ENCODE measurements at regions of chr20 and their contacts with region 1.

Region 1: GRCh38 chr20:40962730-40963504 is 65.7 kb upstream of the TOP1 start:
- DNase-seq: peak; percentile 90
- H3K4me3 Mint-ChIP-seq: no peak overlapping the region
- H3K27ac Mint-ChIP-seq: no peak overlapping the region
- H3K4me1 Mint-ChIP-seq: no peaks in the 10 kb centered on the region
- H3K27me3 Mint-ChIP-seq: peaks cover 48% of the 10 kb centered on the region
- CTCF ChIP-seq: peak; percentile 97

Region 2: DNA sequence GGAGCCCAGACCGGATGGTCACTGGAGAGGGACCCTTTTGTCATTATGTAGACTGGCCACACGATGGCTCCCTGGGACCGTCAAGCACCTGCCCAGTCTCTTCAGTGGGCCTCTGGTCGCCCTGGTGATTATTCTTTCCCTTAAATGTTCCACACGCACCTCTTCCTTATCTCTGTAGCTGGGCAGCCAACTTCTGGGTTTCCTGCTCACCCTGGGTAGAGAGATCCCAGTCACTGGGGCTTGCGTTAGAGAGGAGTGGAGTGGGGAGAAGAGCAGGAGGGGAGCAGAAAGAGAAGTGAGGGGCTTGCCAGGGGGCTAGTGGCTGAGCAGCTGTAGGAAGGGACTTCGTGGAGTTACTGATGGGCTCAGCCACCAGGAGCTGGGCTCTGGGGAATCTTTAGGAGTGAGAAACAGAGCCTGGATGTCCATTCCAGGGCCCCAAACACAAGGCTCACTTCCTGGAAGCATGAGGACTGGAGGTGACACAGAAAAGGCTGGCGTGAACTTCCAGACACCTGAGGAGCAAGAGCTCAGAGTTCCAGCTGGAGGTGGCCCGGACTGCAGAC is 1850.7 kb before region 1 on chr20:
- CTCF ChIA-PET with region 1: interaction called, 11 read pairs
- intact Hi-C with region 1: loop called (anchors 2 kb)
- DNase-seq: peak; percentile 80
- H3K4me3 Mint-ChIP-seq: peak overlapping the region; percentile 10
- H3K27ac Mint-ChIP-seq: peak overlapping the region; percentile 16
- H3K4me1 Mint-ChIP-seq: peaks cover 17% of the 10 kb centered on the region
- H3K27me3 Mint-ChIP-seq: peaks cover 93% of the 10 kb centered on the region
- CTCF ChIP-seq: peak; percentile 82

Region 3: DNA sequence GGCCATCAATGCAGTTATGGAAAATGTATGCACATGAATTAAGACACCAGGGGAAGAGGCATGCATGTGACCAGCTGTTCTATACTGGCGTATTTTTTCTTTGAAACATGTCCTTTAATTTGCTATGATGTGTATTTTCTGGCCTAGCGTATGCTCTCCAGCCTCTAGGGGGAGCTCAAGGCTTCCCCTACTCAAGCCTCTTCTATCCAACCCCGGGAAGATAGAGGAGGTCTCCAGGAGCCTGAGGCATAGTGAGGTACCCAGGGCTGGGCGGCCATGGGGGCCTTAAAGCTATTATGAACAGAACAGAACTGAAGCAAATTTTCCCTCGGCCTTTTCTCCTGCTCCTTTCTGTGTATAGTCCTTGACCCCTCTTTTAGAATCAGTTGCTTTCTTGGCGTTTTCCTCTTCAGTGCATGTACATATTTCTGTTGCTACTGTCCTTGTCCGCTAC is 802.8 kb before region 1 on chr20:
- CTCF ChIA-PET with region 1: interaction called, 3 read pairs
- intact Hi-C with region 1: loop called (anchors 5 kb)
- DNase-seq: peak; percentile 55
- H3K4me3 Mint-ChIP-seq: no peak overlapping the region
- H3K27ac Mint-ChIP-seq: no peak overlapping the region
- H3K4me1 Mint-ChIP-seq: no peaks in the 10 kb centered on the region
- H3K27me3 Mint-ChIP-seq: no peaks in the 10 kb centered on the region
- CTCF ChIP-seq: peak; percentile 69

Region 4: DNA sequence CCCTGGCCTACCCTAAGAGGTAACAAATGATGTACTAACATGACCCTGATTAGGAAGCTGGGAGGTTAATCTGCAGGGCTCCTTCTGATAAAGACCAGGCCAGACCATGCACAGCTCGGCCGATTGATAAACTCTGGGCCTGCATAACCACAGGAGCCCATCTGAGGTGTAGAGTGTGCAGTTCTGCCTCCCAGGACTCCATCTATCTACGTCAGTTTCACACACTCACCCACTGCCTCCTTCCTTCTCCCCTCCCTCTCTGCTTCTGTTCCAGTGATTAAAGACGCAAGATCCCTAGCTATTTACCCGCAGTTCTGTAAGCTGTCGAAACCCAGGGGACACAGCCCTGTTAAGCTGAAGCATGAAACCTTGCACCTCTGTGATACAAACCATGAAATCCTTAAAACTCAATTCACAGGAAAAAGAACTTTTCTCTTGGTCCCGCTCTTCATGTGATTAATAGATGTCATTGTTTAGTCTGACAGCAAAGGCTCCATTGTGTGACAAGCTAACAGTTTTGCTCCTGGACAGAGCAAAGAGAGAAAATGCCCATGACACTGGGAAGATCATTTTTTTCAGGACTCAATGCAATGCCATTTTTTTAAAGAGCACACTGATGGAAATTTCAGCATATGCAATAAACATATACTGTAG is 744.5 kb before region 1 on chr20:
- CTCF ChIA-PET with region 1: no interaction called
- intact Hi-C with region 1: no loop called
- DNase-seq: no peak
- H3K4me3 Mint-ChIP-seq: no peak overlapping the region
- H3K27ac Mint-ChIP-seq: no peak overlapping the region
- H3K4me1 Mint-ChIP-seq: no peaks in the 10 kb centered on the region
- H3K27me3 Mint-ChIP-seq: peaks cover 16% of the 10 kb centered on the region
- CTCF ChIP-seq: no peak

Region 5: GRCh38 chr20:40741507-40742106 is 221.3 kb before region 1 on chr20:
- CTCF ChIA-PET with region 1: interaction called, 23 read pairs
- intact Hi-C with region 1: loop called (anchors 2 kb)
- DNase-seq: peak; percentile 73
- H3K4me3 Mint-ChIP-seq: no peak overlapping the region
- H3K27ac Mint-ChIP-seq: no peak overlapping the region
- H3K4me1 Mint-ChIP-seq: no peaks in the 10 kb centered on the region
- H3K27me3 Mint-ChIP-seq: peaks cover 100% of the 10 kb centered on the region
- CTCF ChIP-seq: peak; percentile 65

Region 6: GRCh38 chr20:41078329-41078728 is 115.4 kb after region 1 on chr20:
- CTCF ChIA-PET with region 1: interaction called, 6 read pairs
- intact Hi-C with region 1: loop called (anchors 1 kb)
- DNase-seq: peak; percentile 61
- H3K4me3 Mint-ChIP-seq: no peak overlapping the region
- H3K27ac Mint-ChIP-seq: peak overlapping the region; percentile 57
- H3K4me1 Mint-ChIP-seq: peaks cover 43% of the 10 kb centered on the region
- H3K27me3 Mint-ChIP-seq: no peaks in the 10 kb centered on the region
- CTCF ChIP-seq: peak; percentile 58

Region 7: GRCh38 chr20:41136680-41137613 is 174.0 kb after region 1 on chr20 and contains the start of gene PLCG1:
- CTCF ChIA-PET with region 1: interaction called, 5 read pairs
- intact Hi-C with region 1: loop called (anchors 1 kb)
- DNase-seq: peak; percentile 96
- H3K4me3 Mint-ChIP-seq: peak within 1 kb of the TSS; percentile 78
- H3K27ac Mint-ChIP-seq: peak within 1 kb of the TSS; percentile 82
- H3K4me1 Mint-ChIP-seq: peaks cover 45% of the 10 kb centered on the region
- H3K27me3 Mint-ChIP-seq: no peaks in the 10 kb centered on the region
- CTCF ChIP-seq: no peak
- total RNA-seq, gene PLCG1: 91.1 and 127 TPM in 2 replicates

Region 8: DNA sequence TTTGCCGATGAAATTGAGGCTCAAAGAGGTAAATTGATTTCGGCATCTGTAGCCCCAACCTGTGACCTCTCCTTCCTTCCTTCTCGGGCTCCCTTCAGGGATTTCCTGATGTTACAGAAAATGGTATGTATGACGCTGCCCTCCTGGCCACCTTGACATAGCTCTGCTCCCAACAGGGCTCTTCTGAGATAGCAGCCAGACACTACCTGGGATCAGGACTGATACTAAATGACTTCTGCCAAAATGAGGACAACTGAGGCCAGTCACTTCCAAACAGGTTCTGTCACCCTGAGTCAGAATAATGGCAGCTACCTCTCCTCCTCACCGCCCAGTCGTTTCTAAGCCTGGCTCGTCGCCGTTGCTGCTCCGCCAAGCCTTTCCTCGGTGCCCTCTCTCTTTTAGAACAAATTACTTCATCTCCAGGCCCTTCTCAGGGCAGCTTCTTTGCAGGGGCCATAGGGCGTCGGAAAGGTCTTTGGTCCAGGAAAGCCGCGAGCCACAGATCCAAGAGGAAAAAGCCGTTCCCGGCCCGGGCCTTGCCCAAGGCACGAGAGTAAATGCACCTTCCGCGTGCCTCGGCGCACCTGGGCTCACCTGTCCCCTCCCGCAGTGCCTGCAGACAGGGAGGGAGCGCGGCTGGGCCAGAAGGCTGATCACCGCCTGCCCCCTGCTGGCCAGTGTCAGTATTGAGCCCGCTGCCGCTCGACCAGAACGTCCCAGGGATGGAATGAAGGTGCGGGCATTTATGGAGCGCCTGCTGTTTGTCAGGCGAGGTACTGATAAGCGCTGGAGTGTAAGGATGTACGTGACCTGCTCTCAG is 376.8 kb after region 1 on chr20:
- CTCF ChIA-PET with region 1: interaction called, 6 read pairs
- intact Hi-C with region 1: loop called (anchors 2 kb)
- DNase-seq: peak; percentile 99
- H3K4me3 Mint-ChIP-seq: peak overlapping the region; percentile 80
- H3K27ac Mint-ChIP-seq: peak overlapping the region; percentile 75
- H3K4me1 Mint-ChIP-seq: peaks cover 14% of the 10 kb centered on the region
- H3K27me3 Mint-ChIP-seq: no peaks in the 10 kb centered on the region
- CTCF ChIP-seq: peak; percentile 99

Region 9: DNA sequence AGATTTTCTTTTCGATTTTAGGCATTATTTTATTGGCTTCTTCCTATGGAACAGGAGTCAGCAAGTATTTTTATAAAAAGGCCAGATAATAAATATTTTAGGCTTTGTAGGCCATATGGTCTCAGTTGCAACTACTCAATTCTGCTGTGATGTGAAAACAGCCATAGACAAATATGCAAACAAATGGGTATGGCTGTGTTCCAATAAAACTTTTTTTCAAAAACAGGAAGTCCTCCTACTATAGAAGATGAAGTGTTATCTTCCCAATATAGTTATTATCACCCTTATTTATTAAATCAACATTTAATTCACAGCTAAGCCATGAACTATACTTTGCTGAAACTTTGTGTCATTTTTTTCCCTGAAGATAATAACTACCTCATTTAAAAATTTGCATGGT is 598.1 kb after region 1 on chr20:
- CTCF ChIA-PET with region 1: no interaction called
- intact Hi-C with region 1: no loop called
- DNase-seq: no peak
- H3K4me3 Mint-ChIP-seq: no peak overlapping the region
- H3K27ac Mint-ChIP-seq: no peak overlapping the region
- H3K4me1 Mint-ChIP-seq: peaks cover 28% of the 10 kb centered on the region
- H3K27me3 Mint-ChIP-seq: no peaks in the 10 kb centered on the region
- CTCF ChIP-seq: no peak

Measured in Calu3 (cell line).